Mammary epithelial cell (primary cell): ENCODE measurements at regions of chr6 and their contacts with region 1.

Region 1: GRCh38 chr6:47168183-47168582 is 126.1 kb upstream of the ADGRF1 start:
- DNase-seq: peak; percentile 99
- H3K4me3 ChIP-seq: no peak overlapping the region
- H3K27ac ChIP-seq: peak overlapping the region; percentile 84
- H3K4me1 ChIP-seq: peaks cover 57% of the 10 kb centered on the region
- H3K27me3 ChIP-seq: no peaks in the 10 kb centered on the region
- CTCF ChIP-seq: no peak

Region 2: GRCh38 chr6:47134476-47135189 is 33.5 kb before region 1 on chr6:
- CTCF ChIA-PET with region 1: no interaction called
- dilution Hi-C with region 1: loop called (anchors 5 kb)
- in situ Hi-C with region 1: no loop called
- intact Hi-C with region 1: loop called (anchors 1 kb)
- DNase-seq: peak; percentile 94
- H3K4me3 ChIP-seq: peak overlapping the region in 1 of 3 experiments; percentile 18
- H3K27ac ChIP-seq: peak overlapping the region; percentile 98
- H3K4me1 ChIP-seq: peaks cover 29% of the 10 kb centered on the region
- H3K27me3 ChIP-seq: no peaks in the 10 kb centered on the region
- CTCF ChIP-seq: no peak

Region 3: DNA sequence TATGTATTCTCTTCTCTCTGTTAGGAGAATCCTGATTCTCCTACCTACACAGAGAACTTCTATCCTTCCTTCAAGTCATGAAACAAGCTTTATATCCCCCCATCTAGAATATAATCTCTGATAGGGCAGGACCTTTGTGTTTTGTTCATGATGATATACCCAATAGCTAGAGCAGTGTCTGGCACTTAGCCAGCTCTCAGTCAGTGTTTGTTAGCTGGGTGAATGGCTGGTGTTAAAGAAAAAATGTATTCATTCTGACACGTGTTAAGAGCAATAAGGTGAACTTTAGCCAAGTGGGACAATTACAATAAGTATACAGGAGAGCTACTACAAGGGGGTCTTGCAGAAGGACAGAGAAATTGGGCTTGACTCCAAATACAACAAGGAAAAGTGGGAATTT is 175.8 kb after region 1 on chr6:
- CTCF ChIA-PET with region 1: interaction called, 25 read pairs
- dilution Hi-C with region 1: no loop called
- in situ Hi-C with region 1: no loop called
- intact Hi-C with region 1: no loop called
- DNase-seq: no peak
- H3K4me3 ChIP-seq: no peak overlapping the region
- H3K27ac ChIP-seq: no peak overlapping the region
- H3K4me1 ChIP-seq: no peaks in the 10 kb centered on the region
- H3K27me3 ChIP-seq: no peaks in the 10 kb centered on the region
- CTCF ChIP-seq: no peak